ENCODE measurements at regions of chr14 and their contacts with region 1.

Region 1: DNA sequence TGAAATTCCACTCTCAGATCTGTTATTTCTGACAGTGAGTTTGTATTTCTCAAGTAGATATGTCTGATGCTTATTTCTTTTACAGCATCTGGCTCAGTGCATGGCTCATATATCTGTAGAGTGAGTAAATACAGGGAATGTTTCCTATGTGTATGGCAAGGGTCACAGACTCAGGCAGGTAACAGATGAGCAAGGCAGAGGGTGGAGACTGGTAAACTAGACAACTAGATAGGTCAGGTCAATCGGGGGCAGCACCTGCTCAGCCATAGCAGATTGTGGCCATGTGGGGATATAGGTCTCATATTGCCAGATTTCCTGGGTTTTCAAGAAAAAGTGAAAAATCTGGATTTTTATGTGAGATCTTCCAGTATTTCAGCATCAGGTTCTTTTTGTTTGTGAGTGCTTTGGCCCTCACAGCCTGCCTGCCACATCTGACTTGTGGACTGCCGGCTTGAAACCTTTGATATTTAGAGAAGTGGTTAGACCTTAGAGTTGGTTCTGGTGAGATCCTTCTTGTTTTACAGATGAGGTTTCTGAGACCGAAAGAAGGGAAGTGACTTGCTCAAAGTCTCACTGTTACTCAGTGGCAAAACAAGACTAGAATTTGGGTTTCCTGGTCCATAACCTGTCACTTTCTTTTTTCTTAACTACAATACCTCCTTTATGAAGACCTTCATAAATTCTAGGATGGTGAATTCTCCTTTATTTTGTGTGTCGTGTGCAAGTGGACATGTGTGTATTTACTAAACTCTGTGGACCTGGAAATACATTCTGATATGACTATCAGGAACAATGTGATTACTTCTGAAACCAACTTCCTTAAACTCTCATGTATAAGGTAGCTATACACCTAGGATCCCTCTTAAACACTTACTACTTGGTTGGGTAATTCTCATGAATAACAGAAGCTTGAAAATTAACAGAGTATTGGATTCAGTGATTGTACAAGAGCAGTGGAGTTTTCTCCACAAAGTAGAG is 34.4 kb downstream of the PROX2 start:
- DNase-seq: peak in 2 of 9 experiments; percentile 17 to 56
- ATAC-seq: peak; percentile 33
- H3K4me3 ChIP-seq: no peak overlapping the region
- H3K4me3 Mint-ChIP-seq: no peak overlapping the region
- H3K27ac ChIP-seq: peak overlapping the region in 1 of 2 experiments; percentile 71
- H3K27ac Mint-ChIP-seq: peak overlapping the region; percentile 82
- H3K4me1 ChIP-seq: peaks cover 54% of the 10 kb centered on the region
- H3K4me1 Mint-ChIP-seq: peaks cover 65% of the 10 kb centered on the region
- H3K27me3 ChIP-seq: no peaks in the 10 kb centered on the region
- H3K27me3 Mint-ChIP-seq: no peaks in the 10 kb centered on the region
- CTCF ChIP-seq: no peak

Region 2: DNA sequence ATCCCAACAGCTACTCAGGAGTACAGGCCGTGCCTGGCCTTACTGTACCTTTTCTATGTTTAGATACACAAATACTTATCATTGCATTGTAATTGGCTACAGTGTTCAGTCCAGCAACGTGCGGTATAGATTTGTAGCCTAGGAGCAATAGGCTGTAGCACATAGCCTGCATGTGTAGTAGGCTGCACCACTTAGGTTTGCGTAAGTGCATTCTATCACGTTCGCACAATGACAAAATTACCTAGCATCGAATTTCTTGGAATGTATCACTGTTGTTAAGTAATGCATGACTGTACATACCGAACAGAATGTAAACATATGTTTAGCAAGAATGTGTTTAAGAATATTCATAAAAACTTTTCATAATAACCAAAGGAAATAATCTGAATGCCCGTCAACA is 461.4 kb before region 1 on chr14:
- CTCF ChIA-PET with region 1: no interaction called
- POLR2A ChIA-PET with region 1: no interaction called
- intact Hi-C with region 1: no loop called
- DNase-seq: no peak
- ATAC-seq: no peak
- H3K4me3 ChIP-seq: no peak overlapping the region
- H3K4me3 Mint-ChIP-seq: no peak overlapping the region
- H3K27ac ChIP-seq: no peak overlapping the region
- H3K27ac Mint-ChIP-seq: no peak overlapping the region
- H3K4me1 ChIP-seq: no peaks in the 10 kb centered on the region
- H3K4me1 Mint-ChIP-seq: no peaks in the 10 kb centered on the region
- H3K27me3 ChIP-seq: no peaks in the 10 kb centered on the region
- H3K27me3 Mint-ChIP-seq: peaks cover 4% of the 10 kb centered on the region
- CTCF ChIP-seq: no peak

Region 3: GRCh38 chr14:74793506-74794168 is 47.9 kb before region 1 on chr14:
- CTCF ChIA-PET with region 1: no interaction called
- POLR2A ChIA-PET with region 1: interaction called, 3 read pairs
- intact Hi-C with region 1: loop called in 1 of 2 experiments (anchors 5 kb)
- DNase-seq: peak in 2 of 9 experiments; percentile 36 to 59
- ATAC-seq: peak; percentile 51
- H3K4me3 ChIP-seq: peak overlapping the region in 1 of 2 experiments; percentile 9
- H3K4me3 Mint-ChIP-seq: peak overlapping the region; percentile 70
- H3K27ac ChIP-seq: peak overlapping the region in 1 of 2 experiments; percentile 3
- H3K27ac Mint-ChIP-seq: peak overlapping the region; percentile 89
- H3K4me1 ChIP-seq: peaks cover 28% of the 10 kb centered on the region
- H3K4me1 Mint-ChIP-seq: peaks cover 47% of the 10 kb centered on the region
- H3K27me3 ChIP-seq: no peaks in the 10 kb centered on the region
- H3K27me3 Mint-ChIP-seq: no peaks in the 10 kb centered on the region
- CTCF ChIP-seq: peak; percentile 35

Region 4: DNA sequence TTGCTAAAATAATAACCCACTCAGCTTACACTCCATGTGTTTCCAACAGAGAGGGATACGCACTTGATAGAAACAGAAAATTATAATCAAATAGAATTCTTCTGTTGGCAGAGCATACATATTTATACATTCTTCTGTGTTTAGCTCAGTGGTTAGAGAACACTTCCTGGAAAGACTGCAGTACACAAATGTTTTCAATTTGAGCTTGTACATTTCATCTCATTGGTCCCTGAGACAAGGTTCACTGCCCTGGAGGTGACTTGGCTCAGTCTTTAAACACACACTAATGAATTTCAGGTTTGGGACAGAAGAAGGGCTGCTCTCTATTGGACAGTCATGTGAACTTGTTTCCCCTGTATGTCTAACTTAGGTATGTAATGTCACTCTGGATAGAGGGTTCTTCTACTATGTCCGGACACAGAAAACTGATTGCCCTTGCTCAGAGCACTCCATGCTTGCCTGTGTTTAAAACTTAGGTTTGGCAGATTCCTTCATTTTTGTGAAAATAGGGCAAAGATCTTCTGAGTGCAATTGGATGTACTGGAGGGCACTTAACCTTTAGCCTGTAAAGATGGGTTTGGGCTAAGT is 11.5 kb after region 1 on chr14:
- CTCF ChIA-PET with region 1: interaction called, 10 read pairs
- POLR2A ChIA-PET with region 1: interaction called, 4 read pairs
- intact Hi-C with region 1: no loop called
- DNase-seq: no peak
- ATAC-seq: no peak
- H3K4me3 ChIP-seq: no peak overlapping the region
- H3K4me3 Mint-ChIP-seq: no peak overlapping the region
- H3K27ac ChIP-seq: no peak overlapping the region
- H3K27ac Mint-ChIP-seq: peak overlapping the region; percentile 15
- H3K4me1 ChIP-seq: peaks cover 16% of the 10 kb centered on the region
- H3K4me1 Mint-ChIP-seq: peaks cover 24% of the 10 kb centered on the region
- H3K27me3 ChIP-seq: no peaks in the 10 kb centered on the region
- H3K27me3 Mint-ChIP-seq: no peaks in the 10 kb centered on the region
- CTCF ChIP-seq: no peak

Region 5: DNA sequence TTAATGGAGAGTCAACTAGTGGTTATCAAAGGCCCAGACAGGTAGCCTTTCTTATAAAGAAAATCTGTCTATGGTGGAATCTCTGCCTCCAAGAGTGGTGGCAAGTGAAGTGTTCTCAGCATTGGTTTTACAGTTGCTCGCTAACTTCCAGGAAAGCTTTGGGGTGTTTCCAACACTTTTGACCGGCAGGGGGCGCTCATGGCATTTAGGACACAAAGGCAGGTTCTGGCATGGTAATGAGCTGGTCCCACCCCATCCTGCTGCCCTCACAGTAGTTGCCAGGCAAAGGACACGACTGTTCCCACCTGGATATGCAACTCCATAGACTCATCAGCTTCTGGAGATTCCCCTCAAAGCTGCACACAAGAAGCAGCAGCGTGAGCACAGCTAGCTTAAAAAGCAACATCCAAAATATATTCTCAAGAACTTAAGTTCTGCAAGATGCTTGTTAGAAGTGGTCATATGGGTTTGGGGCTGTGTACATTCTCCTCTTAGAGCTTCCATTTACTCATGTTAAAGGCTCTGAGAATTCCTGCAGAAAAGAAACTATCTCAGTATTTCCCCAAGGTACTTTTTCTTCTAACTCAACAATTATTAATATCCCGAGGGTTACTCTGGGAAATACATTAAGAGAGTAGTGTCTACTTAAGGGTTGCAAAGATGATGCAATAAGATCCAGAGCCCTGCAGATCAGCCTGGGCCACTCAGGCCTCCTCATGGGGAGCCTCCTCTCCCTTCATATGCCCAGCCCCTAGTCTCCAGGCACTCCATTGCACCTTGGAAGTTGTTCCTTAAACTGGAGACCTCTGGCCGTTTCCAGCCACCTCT is 19.6 kb after region 1 on chr14:
- CTCF ChIA-PET with region 1: interaction called, 30 read pairs
- POLR2A ChIA-PET with region 1: interaction called, 3 read pairs
- intact Hi-C with region 1: no loop called
- DNase-seq: peak; percentile 85 to 99 (median 90)
- ATAC-seq: peak; percentile 84
- H3K4me3 ChIP-seq: no peak overlapping the region
- H3K4me3 Mint-ChIP-seq: no peak overlapping the region
- H3K27ac ChIP-seq: no peak overlapping the region
- H3K27ac Mint-ChIP-seq: no peak overlapping the region
- H3K4me1 ChIP-seq: peaks cover 4% of the 10 kb centered on the region
- H3K4me1 Mint-ChIP-seq: peaks cover 7% of the 10 kb centered on the region
- H3K27me3 ChIP-seq: no peaks in the 10 kb centered on the region
- H3K27me3 Mint-ChIP-seq: no peaks in the 10 kb centered on the region
- CTCF ChIP-seq: peak; percentile 85

Region 6: GRCh38 chr14:74881431-74882361 is 40.2 kb after region 1 on chr14 and contains the start of gene DLST:
- CTCF ChIA-PET with region 1: no interaction called
- POLR2A ChIA-PET with region 1: interaction called, 4 read pairs
- intact Hi-C with region 1: loop called in 1 of 2 experiments (anchors 1 kb)
- DNase-seq: peak; percentile 74 to 92 (median 85)
- ATAC-seq: peak; percentile 76
- H3K4me3 ChIP-seq: peak within 1 kb of the TSS; percentile 62 to 80
- H3K4me3 Mint-ChIP-seq: peak within 1 kb of the TSS; percentile 99
- H3K27ac ChIP-seq: peak within 1 kb of the TSS; percentile 82 to 90
- H3K27ac Mint-ChIP-seq: peak within 1 kb of the TSS; percentile 100
- H3K4me1 ChIP-seq: peaks cover 44% of the 10 kb centered on the region
- H3K4me1 Mint-ChIP-seq: peaks cover 62% of the 10 kb centered on the region
- H3K27me3 ChIP-seq: no peaks in the 10 kb centered on the region
- H3K27me3 Mint-ChIP-seq: no peaks in the 10 kb centered on the region
- CTCF ChIP-seq: no peak
- total RNA-seq, gene DLST: 142 to 156 TPM

Region 7: DNA sequence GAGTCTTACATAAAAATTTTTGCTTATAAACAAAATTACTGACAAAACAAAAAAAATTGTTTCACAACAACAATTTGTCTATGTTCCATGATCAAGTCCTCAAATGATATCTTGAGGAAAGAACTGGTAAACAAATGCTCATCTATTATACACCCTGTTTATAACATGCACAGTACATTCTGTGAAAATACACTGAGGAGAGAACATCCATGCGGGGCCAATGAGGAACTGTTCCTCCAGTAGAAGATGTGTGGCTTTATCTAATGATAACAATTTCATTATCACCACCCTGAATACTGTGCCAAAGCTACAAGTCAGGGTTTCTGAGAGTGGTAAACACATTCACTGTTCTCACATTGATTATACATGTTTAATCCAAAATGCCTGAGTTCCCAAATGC is 199.0 kb after region 1 on chr14:
- CTCF ChIA-PET with region 1: no interaction called
- POLR2A ChIA-PET with region 1: no interaction called
- intact Hi-C with region 1: no loop called
- DNase-seq: no peak
- ATAC-seq: no peak
- H3K4me3 ChIP-seq: no peak overlapping the region
- H3K4me3 Mint-ChIP-seq: no peak overlapping the region
- H3K27ac ChIP-seq: no peak overlapping the region
- H3K27ac Mint-ChIP-seq: no peak overlapping the region
- H3K4me1 ChIP-seq: peaks cover 5% of the 10 kb centered on the region
- H3K4me1 Mint-ChIP-seq: peaks cover 20% of the 10 kb centered on the region
- H3K27me3 ChIP-seq: no peaks in the 10 kb centered on the region
- H3K27me3 Mint-ChIP-seq: no peaks in the 10 kb centered on the region
- CTCF ChIP-seq: no peak